ENCODE measurements at regions of chr14 and their contacts with region 1.

Region 1: GRCh38 chr14:74109369-74109768 is 24.6 kb downstream of the LIN52 start:
- DNase-seq: no peak
- H3K4me3 ChIP-seq: no peak overlapping the region
- H3K27ac ChIP-seq: no peak overlapping the region
- H3K4me1 ChIP-seq: no peaks in the 10 kb centered on the region
- H3K27me3 ChIP-seq: no peaks in the 10 kb centered on the region
- CTCF ChIP-seq: no peak
- EP300 ChIP-seq: no peak
- POLR2A ChIP-seq: no peak

Region 2: DNA sequence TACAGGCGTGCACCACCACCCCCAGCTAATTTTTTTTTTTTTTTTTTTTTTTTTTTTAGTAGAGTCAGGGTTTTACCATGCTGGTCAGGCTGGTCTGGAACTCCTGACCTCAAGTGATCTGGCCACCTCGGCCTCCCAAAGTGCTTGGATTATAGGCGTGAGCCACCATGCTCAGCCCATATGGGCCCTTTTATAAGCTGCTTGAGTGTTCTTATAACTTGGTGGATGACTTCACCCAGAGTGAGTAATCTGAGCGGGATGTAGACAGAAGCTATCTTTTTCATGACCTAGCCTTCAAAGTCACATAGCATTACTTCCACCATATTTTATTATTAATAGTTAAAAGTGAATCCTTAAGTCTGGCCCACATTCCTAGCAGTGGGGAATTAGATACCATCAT is 73.8 kb before region 1 on chr14:
- intact Hi-C with region 1: no loop called
- DNase-seq: no peak
- H3K4me3 ChIP-seq: no peak overlapping the region
- H3K27ac ChIP-seq: no peak overlapping the region
- H3K4me1 ChIP-seq: no peaks in the 10 kb centered on the region
- H3K27me3 ChIP-seq: no peaks in the 10 kb centered on the region
- CTCF ChIP-seq: no peak
- EP300 ChIP-seq: no peak
- POLR2A ChIP-seq: no peak

Region 3: GRCh38 chr14:74240794-74241651 is 131.7 kb after region 1 on chr14:
- intact Hi-C with region 1: loop called in 2 of 4 experiments (anchors 10 kb)
- DNase-seq: no peak
- H3K4me3 ChIP-seq: peak overlapping the region; percentile 1
- H3K27ac ChIP-seq: no peak overlapping the region
- H3K4me1 ChIP-seq: peaks cover 9% of the 10 kb centered on the region
- H3K27me3 ChIP-seq: peaks cover 6% of the 10 kb centered on the region
- CTCF ChIP-seq: no peak
- EP300 ChIP-seq: no peak
- POLR2A ChIP-seq: no peak

Region 4: GRCh38 chr14:74249433-74250375 is 140.3 kb after region 1 on chr14:
- intact Hi-C with region 1: loop called in 3 of 4 experiments (anchors 5 to 10 kb)
- DNase-seq: no peak
- H3K4me3 ChIP-seq: no peak overlapping the region
- H3K27ac ChIP-seq: no peak overlapping the region
- H3K4me1 ChIP-seq: no peaks in the 10 kb centered on the region
- H3K27me3 ChIP-seq: no peaks in the 10 kb centered on the region
- CTCF ChIP-seq: no peak
- EP300 ChIP-seq: no peak
- POLR2A ChIP-seq: no peak